HepG2 (cell line): ENCODE measurements at regions of chr16 and their contacts with region 1.

Region 1: DNA sequence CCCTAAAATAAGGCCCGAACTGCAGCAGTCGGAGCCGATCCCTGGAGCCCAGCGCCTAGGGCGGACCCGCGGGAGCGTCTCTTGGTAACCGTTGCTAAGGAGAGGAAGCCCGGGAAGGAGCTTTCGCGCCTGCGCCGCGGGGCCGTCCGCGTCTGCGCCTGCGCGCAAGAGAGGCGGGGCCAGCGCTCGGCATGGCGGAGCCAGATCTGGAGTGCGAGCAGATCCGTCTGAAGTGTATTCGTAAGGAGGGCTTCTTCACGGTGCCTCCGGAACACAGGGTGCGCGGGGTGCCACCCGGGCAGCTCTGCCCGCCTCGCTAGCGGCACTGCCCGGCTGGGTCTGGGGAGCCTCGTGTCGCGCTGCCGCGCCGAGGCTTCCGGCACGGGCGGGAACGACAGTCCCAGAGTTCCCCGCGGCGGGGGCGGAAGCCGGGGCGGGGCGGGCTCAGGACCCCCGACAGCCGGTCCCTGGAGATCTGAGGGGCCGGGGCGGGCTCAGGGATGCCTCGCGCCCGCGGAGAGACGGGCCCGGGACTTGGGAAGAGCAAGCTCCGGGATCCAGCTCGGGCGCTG is at the start of gene CDK10:
- DNase-seq: no peak
- ATAC-seq: no peak
- H3K4me3 ChIP-seq: peak within 1 kb of the TSS; percentile 22 to 50 (median 35); a peak in 5 of 6 replicates
- H3K27ac ChIP-seq: peak within 1 kb of the TSS; percentile 89
- H3K4me1 ChIP-seq: peaks cover 62% of the 10 kb centered on the region
- H3K27me3 ChIP-seq: no peaks in the 10 kb centered on the region
- CTCF ChIP-seq: no peak
- EP300 ChIP-seq: no peak
- POLR2A ChIP-seq: no peak
- RAD21 ChIP-seq: no peak
- total RNA-seq, gene CDK10: 1.2 and 2.5 TPM in 2 replicates

Region 2: DNA sequence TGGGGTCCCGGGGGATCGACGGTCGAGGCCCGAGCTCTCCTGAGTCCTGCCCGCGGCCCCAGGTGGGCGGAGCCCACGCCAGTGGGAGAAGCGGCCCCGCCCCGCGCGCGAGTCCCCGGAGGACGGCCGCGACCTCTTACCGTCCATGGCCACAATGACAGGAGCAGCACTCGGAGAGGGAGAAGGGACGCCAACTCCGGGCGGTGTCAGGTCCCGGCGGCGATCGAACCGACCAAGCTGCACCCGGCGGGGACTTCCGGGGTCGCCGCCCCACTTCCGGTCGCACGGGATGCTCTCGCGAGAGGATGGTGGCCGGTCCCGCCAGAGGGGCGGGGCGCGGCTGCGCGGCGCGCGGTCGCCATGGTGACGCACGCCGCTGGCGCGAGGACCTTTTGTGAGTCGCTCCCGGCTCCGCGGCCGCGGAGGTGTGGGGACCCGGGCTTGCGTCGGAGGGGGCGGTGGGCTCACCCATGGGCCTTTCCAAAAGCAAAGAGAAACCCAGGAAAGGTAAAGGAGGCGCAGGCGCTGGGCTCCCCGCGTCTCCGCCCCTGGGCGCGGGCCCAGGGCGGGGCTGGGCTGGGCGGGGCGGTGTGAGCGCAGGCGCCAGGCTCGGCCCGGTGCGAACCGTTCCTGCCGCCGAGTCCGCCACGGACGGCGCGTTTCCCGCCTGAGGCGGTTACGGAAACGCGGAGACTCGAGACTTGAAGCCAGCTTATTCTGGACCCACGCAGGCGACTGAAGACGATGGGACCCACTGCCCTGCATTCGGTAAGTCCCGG is 29.0 kb before region 1 on chr16 and contains the starts of genes CHMP1A and SPATA33:
- CTCF ChIA-PET with region 1: no interaction called
- POLR2A ChIA-PET with region 1: interaction called, 13 read pairs
- in situ Hi-C with region 1: no loop called
- intact Hi-C with region 1: no loop called
- DNase-seq: peak; percentile 78
- ATAC-seq: peak; percentile 93
- H3K4me3 ChIP-seq: peak within 1 kb of the TSS; percentile 91 to 100 (median 99)
- H3K27ac ChIP-seq: peak within 1 kb of the TSS; percentile 64
- H3K4me1 ChIP-seq: peaks cover 38% of the 10 kb centered on the region
- H3K27me3 ChIP-seq: no peaks in the 10 kb centered on the region; a peak in 1 of 5 replicates
- CTCF ChIP-seq: no peak; the same call in 1 of the 2 replicates
- EP300 ChIP-seq: no peak
- POLR2A ChIP-seq: peak; percentile 62 to 72
- RAD21 ChIP-seq: peak; percentile 49
- total RNA-seq, gene CHMP1A: 69.4 and 80.0 TPM in 2 replicates
- total RNA-seq, gene SPATA33: 11.0 and 11.2 TPM in 2 replicates

Region 3: DNA sequence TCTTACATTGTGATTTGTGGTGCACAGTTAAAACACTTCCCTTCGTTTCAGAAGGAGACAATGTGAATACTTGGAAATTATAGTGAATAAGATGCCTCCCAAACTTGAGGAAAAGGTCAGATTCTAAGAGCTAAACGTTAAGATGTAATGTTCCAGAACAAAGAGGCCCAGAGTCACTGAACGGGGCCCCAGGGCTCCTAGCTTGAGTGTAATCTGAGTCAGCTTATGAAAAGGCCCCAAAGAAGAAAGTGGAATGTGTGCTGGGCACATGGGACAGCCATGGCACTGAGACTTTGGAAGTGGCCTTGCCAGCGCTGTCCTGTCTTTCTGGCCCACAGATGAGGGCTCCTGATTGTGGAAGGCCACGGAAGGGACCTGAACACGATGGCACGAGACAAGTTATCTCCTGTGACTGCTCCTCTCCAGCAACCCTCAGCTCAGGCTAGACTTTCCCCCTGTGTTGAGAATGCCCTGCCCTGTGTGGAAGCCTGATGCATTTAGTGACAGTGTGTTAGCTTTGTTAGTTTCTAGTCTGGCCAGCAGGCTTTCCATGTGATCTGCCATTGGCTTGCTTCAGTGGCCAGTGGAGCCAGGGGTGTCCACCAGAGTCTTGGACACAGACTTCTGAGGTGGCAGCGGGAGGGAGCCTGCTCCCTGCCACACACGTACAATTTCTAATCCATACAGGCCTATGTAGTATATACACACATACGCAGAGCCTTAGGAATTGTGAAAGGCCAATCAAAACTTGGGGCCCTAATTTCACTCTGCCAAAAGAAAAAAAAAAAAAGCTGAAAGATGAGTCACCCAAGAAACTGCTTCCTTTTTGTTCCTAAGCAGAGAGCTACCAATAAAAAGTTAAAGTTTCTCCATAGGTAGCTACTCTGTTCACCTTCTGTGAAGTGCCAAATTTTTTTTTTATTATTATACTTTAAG is 15.8 kb before region 1 on chr16:
- CTCF ChIA-PET with region 1: no interaction called
- POLR2A ChIA-PET with region 1: interaction called, 3 read pairs
- in situ Hi-C with region 1: no loop called
- intact Hi-C with region 1: loop called (anchors 2 kb)
- DNase-seq: peak; percentile 21
- ATAC-seq: peak; percentile 71
- H3K4me3 ChIP-seq: no peak overlapping the region
- H3K27ac ChIP-seq: no peak overlapping the region
- H3K4me1 ChIP-seq: peaks cover 26% of the 10 kb centered on the region
- H3K27me3 ChIP-seq: no peaks in the 10 kb centered on the region
- CTCF ChIP-seq: no peak
- EP300 ChIP-seq: no peak
- POLR2A ChIP-seq: no peak
- RAD21 ChIP-seq: no peak

Region 4: DNA sequence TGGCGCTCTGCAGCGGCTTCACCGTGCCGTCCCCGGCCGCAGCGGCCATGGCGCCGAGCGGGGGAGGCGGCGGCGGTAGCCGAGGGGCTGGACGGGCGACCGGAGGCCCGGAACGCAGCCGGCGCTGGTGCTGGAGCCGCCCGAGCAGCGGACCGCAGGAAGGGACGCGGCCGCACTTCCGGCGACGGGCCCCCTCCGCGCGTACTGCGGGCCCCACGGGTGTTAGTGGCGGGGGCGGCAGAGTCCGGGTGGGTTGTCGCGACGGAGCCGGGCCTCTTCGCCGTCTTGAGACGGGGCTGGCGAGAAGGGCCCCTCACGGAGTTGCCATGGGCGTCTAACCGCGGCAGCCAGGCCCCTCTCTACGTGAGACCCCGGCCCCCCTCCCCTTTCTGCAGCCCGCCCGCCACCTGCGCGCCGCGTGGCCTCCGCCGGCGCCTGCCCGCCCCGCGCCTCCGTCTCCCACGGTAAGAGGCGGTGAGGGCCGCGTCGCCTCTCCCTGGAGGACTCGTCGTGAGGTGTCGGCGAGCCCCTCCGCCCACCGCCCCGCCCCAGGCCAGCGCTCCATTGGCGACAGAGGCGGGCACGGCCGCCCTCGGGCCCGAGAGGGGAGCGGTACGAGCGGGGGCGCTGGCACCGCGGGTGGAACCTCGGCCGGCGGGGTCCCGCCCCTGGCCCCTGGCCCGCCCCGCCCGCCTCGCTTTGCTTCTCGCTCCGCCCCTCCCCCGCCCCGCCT is 34.4 kb after region 1 on chr16 and contains the starts of genes VPS9D1 and ZNF276:
- CTCF ChIA-PET with region 1: no interaction called
- POLR2A ChIA-PET with region 1: no interaction called
- in situ Hi-C with region 1: no loop called
- intact Hi-C with region 1: no loop called
- DNase-seq: peak; percentile 65
- ATAC-seq: peak; percentile 77
- H3K4me3 ChIP-seq: peak within 1 kb of the TSS; percentile 72 to 89 (median 82)
- H3K27ac ChIP-seq: peak within 1 kb of the TSS; percentile 97
- H3K4me1 ChIP-seq: peaks cover 39% of the 10 kb centered on the region
- H3K27me3 ChIP-seq: no peaks in the 10 kb centered on the region; a peak in 1 of 5 replicates
- CTCF ChIP-seq: peak; percentile 30; the same call in 1 of the 2 replicates
- EP300 ChIP-seq: peak; percentile 46 to 59; a peak in 2 of 4 replicates
- POLR2A ChIP-seq: peak; percentile 63 to 78; a peak in 3 of 4 replicates
- RAD21 ChIP-seq: peak; percentile 51
- total RNA-seq, gene VPS9D1: 3.8 and 10.1 TPM in 2 replicates
- total RNA-seq, gene ZNF276: 6.8 and 17.7 TPM in 2 replicates